PC-9 (cell line): ENCODE measurements at regions of chr6 and their contacts with region 1.

Region 1: DNA sequence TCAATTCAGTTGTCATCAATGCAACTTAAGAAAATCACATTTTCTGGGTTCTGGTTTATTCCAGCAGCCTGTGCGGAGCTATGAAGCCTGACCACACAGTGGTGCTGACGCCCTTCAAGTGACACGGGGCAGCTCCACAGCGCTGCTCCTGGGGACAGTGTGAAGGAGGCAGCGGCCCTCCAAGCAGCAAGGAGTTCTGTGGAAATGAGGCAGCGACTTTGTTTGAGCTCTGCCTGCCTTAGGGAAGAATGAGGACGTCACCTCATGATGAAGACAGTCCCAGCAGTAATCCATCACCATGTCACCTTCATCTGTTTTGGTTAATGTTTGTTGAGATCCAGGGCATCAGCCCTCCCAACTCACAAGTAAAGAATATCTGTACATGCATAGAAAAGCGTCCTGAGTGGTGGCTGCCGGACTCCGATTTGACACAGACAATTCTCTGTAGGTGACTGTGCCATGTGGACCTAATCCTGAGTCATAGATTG is 168.5 kb upstream of the UST start:
- DNase-seq: peak; percentile 37 to 56
- H3K4me3 ChIP-seq: no peak overlapping the region
- H3K27ac ChIP-seq: no peak overlapping the region
- H3K4me1 ChIP-seq: no peaks in the 10 kb centered on the region
- H3K27me3 ChIP-seq: peaks cover 5% of the 10 kb centered on the region; the same call in 1 of the 2 replicates
- CTCF ChIP-seq: peak; percentile 82

Region 2: GRCh38 chr6:147567141-147567805 is 1011.0 kb before region 1 on chr6:
- CTCF ChIA-PET with region 1: no interaction called
- POLR2A ChIA-PET with region 1: no interaction called
- intact Hi-C with region 1: no loop called
- DNase-seq: no peak
- H3K4me3 ChIP-seq: no peak overlapping the region
- H3K27ac ChIP-seq: no peak overlapping the region
- H3K4me1 ChIP-seq: no peaks in the 10 kb centered on the region
- H3K27me3 ChIP-seq: no peaks in the 10 kb centered on the region
- CTCF ChIP-seq: no peak

Region 3: DNA sequence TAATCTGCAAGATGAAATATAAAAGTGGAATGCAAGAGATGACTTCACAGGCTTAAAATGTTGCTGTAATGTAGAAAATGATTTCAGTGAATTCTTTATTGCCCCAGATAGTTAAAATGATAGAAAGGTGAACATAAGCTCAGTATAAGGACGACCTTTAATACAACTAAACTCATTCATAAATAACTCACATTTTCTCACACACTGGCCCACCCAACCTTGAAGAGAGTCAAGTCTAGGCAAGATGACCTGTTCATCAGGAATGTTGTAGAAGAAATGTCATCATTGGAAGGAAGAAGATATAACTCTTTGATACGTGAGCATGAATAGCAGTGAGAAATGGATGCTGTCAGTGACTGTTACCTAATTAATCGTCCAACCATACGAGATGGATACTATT is 346.7 kb before region 1 on chr6:
- CTCF ChIA-PET with region 1: no interaction called
- POLR2A ChIA-PET with region 1: no interaction called
- intact Hi-C with region 1: no loop called
- DNase-seq: peak in 1 of 2 experiments; percentile 77
- H3K4me3 ChIP-seq: no peak overlapping the region
- H3K27ac ChIP-seq: peak overlapping the region; percentile 48; the same call in 1 of the 2 replicates
- H3K4me1 ChIP-seq: peaks cover 23% of the 10 kb centered on the region
- H3K27me3 ChIP-seq: no peaks in the 10 kb centered on the region
- CTCF ChIP-seq: no peak

Region 4: GRCh38 chr6:148746363-148747144 is 168.3 kb after region 1 on chr6 and contains the start of gene UST:
- CTCF ChIA-PET with region 1: interaction called, 3 read pairs
- POLR2A ChIA-PET with region 1: no interaction called
- intact Hi-C with region 1: loop called (anchors 5 kb)
- DNase-seq: peak; percentile 70 to 80
- H3K4me3 ChIP-seq: peak within 1 kb of the TSS; percentile 82
- H3K27ac ChIP-seq: 0 out of 2 replicates have a peak within 1 kb of the TSS, but pooled peaks have one; percentile 20
- H3K4me1 ChIP-seq: peaks cover 8% of the 10 kb centered on the region
- H3K27me3 ChIP-seq: no peaks in the 10 kb centered on the region
- CTCF ChIP-seq: peak; percentile 61
- total RNA-seq, gene UST: 3.9 and 4.2 TPM in 2 replicates

Region 5: DNA sequence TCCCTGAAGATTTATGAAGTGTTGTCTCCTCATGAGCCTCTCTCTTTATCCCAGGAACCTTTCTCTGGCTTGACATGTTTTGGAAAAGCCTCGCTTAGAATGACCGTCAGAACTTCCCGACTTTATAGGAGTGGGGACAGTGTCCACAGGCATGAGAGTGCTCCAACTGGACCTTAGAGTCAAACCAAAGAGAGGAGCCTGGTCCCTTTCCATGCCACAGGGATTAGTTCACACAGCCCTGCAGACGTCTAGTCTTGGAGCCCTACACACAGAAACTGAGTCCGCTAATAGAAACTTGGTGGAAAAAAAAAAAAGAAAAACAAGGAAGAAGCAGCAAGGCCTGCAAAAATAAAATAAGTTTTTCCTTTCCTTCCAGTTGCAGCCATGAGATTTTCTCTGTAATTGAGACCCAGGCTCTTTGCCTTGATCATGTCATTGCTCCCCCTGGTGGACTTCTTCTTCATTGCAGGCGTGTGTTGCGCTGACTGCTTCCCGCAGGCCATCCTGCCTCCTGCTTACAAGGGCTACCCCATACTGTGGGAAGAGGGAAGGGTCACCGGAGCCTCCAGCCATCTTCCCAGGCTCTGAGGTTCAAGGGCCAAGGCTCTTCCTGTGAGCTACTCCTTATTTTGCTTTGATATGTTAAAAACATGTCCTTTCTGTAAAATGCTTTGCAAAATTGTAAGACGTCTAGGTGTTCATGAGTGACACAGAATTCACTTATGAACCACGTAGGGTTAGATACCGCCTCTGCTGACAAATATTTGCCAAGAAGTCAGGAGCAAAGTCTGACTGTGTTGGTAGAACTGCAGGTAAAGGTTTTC is 369.5 kb after region 1 on chr6:
- CTCF ChIA-PET with region 1: no interaction called
- POLR2A ChIA-PET with region 1: no interaction called
- intact Hi-C with region 1: loop called (anchors 2 kb)
- DNase-seq: peak; percentile 53 to 56
- H3K4me3 ChIP-seq: no peak overlapping the region
- H3K27ac ChIP-seq: no peak overlapping the region
- H3K4me1 ChIP-seq: no peaks in the 10 kb centered on the region
- H3K27me3 ChIP-seq: no peaks in the 10 kb centered on the region
- CTCF ChIP-seq: peak; percentile 86

Region 6: GRCh38 chr6:148972481-148972880 is 394.2 kb after region 1 on chr6:
- CTCF ChIA-PET with region 1: interaction called, 10 read pairs
- POLR2A ChIA-PET with region 1: interaction called, 7 read pairs
- intact Hi-C with region 1: no loop called
- DNase-seq: peak; percentile 66 to 69
- H3K4me3 ChIP-seq: no peak overlapping the region
- H3K27ac ChIP-seq: no peak overlapping the region
- H3K4me1 ChIP-seq: no peaks in the 10 kb centered on the region
- H3K27me3 ChIP-seq: 0 out of 2 replicates have a peak, but pooled peaks cover 6% of the 10 kb centered on the region
- CTCF ChIP-seq: no peak

Region 7: GRCh38 chr6:149513915-149514314 is 935.6 kb after region 1 on chr6:
- CTCF ChIA-PET with region 1: no interaction called
- POLR2A ChIA-PET with region 1: no interaction called
- intact Hi-C with region 1: loop called (anchors 2 kb)
- DNase-seq: no peak
- H3K4me3 ChIP-seq: no peak overlapping the region
- H3K27ac ChIP-seq: no peak overlapping the region
- H3K4me1 ChIP-seq: no peaks in the 10 kb centered on the region
- H3K27me3 ChIP-seq: no peaks in the 10 kb centered on the region
- CTCF ChIP-seq: no peak